ENCODE measurements at regions of chr1 and their contacts with region 1.

Region 1: DNA sequence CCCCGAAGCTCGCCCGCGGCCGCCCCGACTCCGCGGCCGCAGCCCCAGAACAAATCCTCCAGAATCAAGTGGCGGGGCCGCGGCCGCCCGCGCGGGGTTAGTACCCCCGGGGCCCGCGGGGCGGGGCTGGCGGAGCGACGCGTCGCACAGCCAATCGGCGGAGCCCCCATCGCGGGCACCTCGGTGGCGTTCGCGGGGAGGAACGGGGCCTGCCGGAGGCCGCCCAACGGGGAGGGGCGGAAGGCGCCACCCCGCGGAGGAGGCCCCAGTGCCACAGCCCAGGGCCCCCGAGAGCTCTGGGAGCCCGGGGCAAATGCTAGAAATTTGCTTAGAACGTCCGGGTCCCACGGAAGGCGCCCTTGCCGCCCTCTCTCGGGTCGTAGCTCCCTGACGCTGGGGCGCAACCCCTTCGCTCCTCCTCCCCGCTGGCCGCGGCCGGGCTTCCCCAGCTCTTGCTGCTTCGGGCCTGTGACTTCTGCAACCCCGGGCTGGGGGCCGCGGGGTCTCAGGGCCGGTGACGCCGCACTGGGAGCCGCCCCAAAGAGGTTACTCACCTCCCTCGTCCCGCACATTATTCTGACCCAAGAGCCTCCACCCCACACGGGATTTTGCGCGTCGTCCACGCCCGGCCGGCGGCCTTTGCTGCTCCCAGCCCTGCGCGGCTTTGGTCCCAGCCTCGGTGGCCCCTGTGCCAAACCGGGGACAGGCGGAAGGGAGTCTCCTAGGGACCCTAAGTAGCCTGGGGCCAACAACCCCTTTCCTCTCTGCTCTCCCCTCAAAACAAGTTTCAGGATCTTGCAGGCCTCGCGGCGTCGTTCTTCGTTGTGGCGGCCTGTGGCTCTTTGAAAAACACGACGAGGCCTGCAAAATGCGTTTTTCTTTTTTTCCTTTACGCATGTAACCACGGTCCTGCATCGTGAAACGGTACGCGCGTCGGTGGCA is at the start of gene RUNX3:
- DNase-seq: peak; percentile 80
- H3K4me3 ChIP-seq: no peak within 1 kb of the TSS
- H3K27ac ChIP-seq: no peak within 1 kb of the TSS
- H3K4me1 ChIP-seq: peaks cover 0 to 8% of the 10 kb centered on the region in 2 experiments; a peak in 1 of 4 replicates
- H3K27me3 ChIP-seq: peaks cover 87% of the 10 kb centered on the region
- CTCF ChIP-seq: no peak
- EP300 ChIP-seq: no peak
- RAD21 ChIP-seq: no peak
- polyA plus RNA-seq, gene RUNX3: not detected in 2 replicates

Region 2: GRCh38 chr1:25030674-25031589 is 100.5 kb after region 1 on chr1:
- CTCF ChIA-PET with region 1: interaction called, 19 read pairs
- POLR2A ChIA-PET with region 1: no interaction called
- DNase-seq: no peak
- H3K4me3 ChIP-seq: no peak overlapping the region
- H3K27ac ChIP-seq: no peak overlapping the region
- H3K4me1 ChIP-seq: no peaks in the 10 kb centered on the region; a peak in 1 of 4 replicates
- H3K27me3 ChIP-seq: no peaks in the 10 kb centered on the region
- CTCF ChIP-seq: no peak
- EP300 ChIP-seq: no peak
- RAD21 ChIP-seq: no peak

Region 3: GRCh38 chr1:25090707-25091422 is 160.4 kb after region 1 on chr1:
- CTCF ChIA-PET with region 1: interaction called, 11 read pairs
- POLR2A ChIA-PET with region 1: no interaction called
- DNase-seq: no peak
- H3K4me3 ChIP-seq: no peak overlapping the region
- H3K27ac ChIP-seq: peak overlapping the region in 1 of 2 experiments; percentile 70; a peak in 2 of 4 replicates
- H3K4me1 ChIP-seq: peaks cover 0 to 14% of the 10 kb centered on the region in 2 experiments; a peak in 1 of 4 replicates
- H3K27me3 ChIP-seq: no peaks in the 10 kb centered on the region; the same call in 1 of the 2 replicates
- CTCF ChIP-seq: no peak
- EP300 ChIP-seq: no peak
- RAD21 ChIP-seq: no peak

Region 4: GRCh38 chr1:25204797-25205480 is 274.5 kb after region 1 on chr1:
- CTCF ChIA-PET with region 1: interaction called, 40 read pairs
- POLR2A ChIA-PET with region 1: no interaction called
- DNase-seq: peak; percentile 72
- H3K4me3 ChIP-seq: peak overlapping the region in 1 of 2 experiments; percentile 32; a peak in 1 of 4 replicates
- H3K27ac ChIP-seq: no peak overlapping the region
- H3K4me1 ChIP-seq: no peaks in the 10 kb centered on the region; a peak in 1 of 4 replicates
- H3K27me3 ChIP-seq: no peaks in the 10 kb centered on the region; the same call in 1 of the 2 replicates
- CTCF ChIP-seq: peak; percentile 85
- EP300 ChIP-seq: no peak
- RAD21 ChIP-seq: peak; percentile 75